Activated CD4-positive, alpha-beta T cell treated with anti-CD3 and anti-CD28 coated beads, Interleukin-2, amount 10 ng/mL, durations not matched to agents 24 days and 14 days (primary cell): ENCODE measurements at regions of chr15 and their contacts with region 1.

Region 1: GRCh38 chr15:52331490-52332240 is 36.1 kb upstream of the MYO5C start:
- DNase-seq: peak; percentile 90
- H3K4me3 Mint-ChIP-seq: peak overlapping the region; percentile 56
- H3K27ac Mint-ChIP-seq: peak overlapping the region; percentile 49
- H3K4me1 Mint-ChIP-seq: peaks cover 24% of the 10 kb centered on the region
- H3K27me3 Mint-ChIP-seq: no peaks in the 10 kb centered on the region

Region 2: GRCh38 chr15:52256366-52256765 is 75.3 kb before region 1 on chr15:
- intact Hi-C with region 1: loop called (anchors 2 kb)
- DNase-seq: peak; percentile 93
- H3K4me3 Mint-ChIP-seq: peak overlapping the region; percentile 59
- H3K27ac Mint-ChIP-seq: peak overlapping the region; percentile 70
- H3K4me1 Mint-ChIP-seq: peaks cover 36% of the 10 kb centered on the region
- H3K27me3 Mint-ChIP-seq: no peaks in the 10 kb centered on the region

Region 3: GRCh38 chr15:52370010-52370409 is 38.3 kb after region 1 on chr15:
- intact Hi-C with region 1: no loop called
- DNase-seq: no peak
- H3K4me3 Mint-ChIP-seq: no peak overlapping the region
- H3K27ac Mint-ChIP-seq: no peak overlapping the region
- H3K4me1 Mint-ChIP-seq: no peaks in the 10 kb centered on the region
- H3K27me3 Mint-ChIP-seq: no peaks in the 10 kb centered on the region

Region 4: GRCh38 chr15:52466134-52466701 is 134.6 kb after region 1 on chr15:
- intact Hi-C with region 1: loop called (anchors 1 kb)
- DNase-seq: peak; percentile 78
- H3K4me3 Mint-ChIP-seq: no peak overlapping the region
- H3K27ac Mint-ChIP-seq: no peak overlapping the region
- H3K4me1 Mint-ChIP-seq: peaks cover 29% of the 10 kb centered on the region
- H3K27me3 Mint-ChIP-seq: no peaks in the 10 kb centered on the region

Region 5: GRCh38 chr15:52528991-52529926 is 197.6 kb after region 1 on chr15:
- intact Hi-C with region 1: loop called (anchors 1 kb)
- DNase-seq: peak; percentile 94
- H3K4me3 Mint-ChIP-seq: peak overlapping the region; percentile 76
- H3K27ac Mint-ChIP-seq: peak overlapping the region; percentile 81
- H3K4me1 Mint-ChIP-seq: peaks cover 30% of the 10 kb centered on the region
- H3K27me3 Mint-ChIP-seq: peaks cover 14% of the 10 kb centered on the region

Region 6: DNA sequence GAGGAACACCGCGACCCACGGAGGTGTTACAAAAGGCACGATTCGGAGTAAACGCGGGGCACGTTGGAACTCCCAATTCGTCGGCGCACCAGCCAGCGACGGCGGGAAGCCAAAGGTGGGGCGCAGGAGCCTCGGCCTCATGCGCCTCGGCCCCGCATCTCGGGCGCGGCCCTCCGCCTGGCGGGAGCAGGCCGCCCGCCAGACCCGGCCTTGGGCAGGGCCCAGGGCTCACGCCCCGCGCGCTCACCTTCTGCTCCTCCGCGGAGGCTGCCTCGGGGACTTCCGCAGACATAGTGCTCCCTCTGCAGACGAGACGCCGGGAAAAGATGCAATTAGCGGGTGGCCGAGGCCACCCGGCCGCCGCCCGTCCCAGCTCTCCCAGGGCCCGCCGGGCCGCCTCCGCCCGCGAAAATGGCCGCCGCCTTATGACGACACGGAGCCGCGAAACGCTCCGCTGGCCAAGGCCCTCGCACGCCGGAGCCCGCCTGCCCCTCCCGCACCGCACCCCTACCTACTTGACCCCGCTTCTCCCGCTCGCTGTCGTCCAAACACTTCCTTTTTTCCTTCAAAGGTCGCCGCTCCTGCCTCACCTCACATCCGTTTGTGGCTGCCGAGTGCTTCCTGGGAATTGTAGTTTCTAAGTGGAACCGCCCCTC is 237.1 kb after region 1 on chr15 and contains the start of gene ARPP19:
- intact Hi-C with region 1: loop called (anchors 1 kb)
- DNase-seq: peak; percentile 94
- H3K4me3 Mint-ChIP-seq: peak within 1 kb of the TSS; percentile 88
- H3K27ac Mint-ChIP-seq: peak within 1 kb of the TSS; percentile 99
- H3K4me1 Mint-ChIP-seq: peaks cover 29% of the 10 kb centered on the region
- H3K27me3 Mint-ChIP-seq: peaks cover 1% of the 10 kb centered on the region
- total RNA-seq, gene ARPP19: 191 and 215 TPM in 2 replicates

Region 7: GRCh38 chr15:52609593-52609992 is 277.9 kb after region 1 on chr15:
- intact Hi-C with region 1: loop called (anchors 10 kb)
- DNase-seq: no peak
- H3K4me3 Mint-ChIP-seq: no peak overlapping the region
- H3K27ac Mint-ChIP-seq: no peak overlapping the region
- H3K4me1 Mint-ChIP-seq: no peaks in the 10 kb centered on the region
- H3K27me3 Mint-ChIP-seq: no peaks in the 10 kb centered on the region

Region 8: GRCh38 chr15:52735231-52736089 is 403.8 kb after region 1 on chr15:
- intact Hi-C with region 1: loop called (anchors 1 kb)
- DNase-seq: peak; percentile 94
- H3K4me3 Mint-ChIP-seq: no peak overlapping the region
- H3K27ac Mint-ChIP-seq: peak overlapping the region; percentile 18
- H3K4me1 Mint-ChIP-seq: peaks cover 17% of the 10 kb centered on the region
- H3K27me3 Mint-ChIP-seq: peaks cover 8% of the 10 kb centered on the region